Activated T-helper 1 cell treated with anti-CD3 and anti-CD28 coated beads, Interleukin-12 subunit alpha, Interleukin-12 subunit beta, Interleukin-2, Interleukin-4 antibody, amounts not matched to agents 30 ng/mL and 10 ng/mL and 1 ng/mL, durations not matched to agents 14 hours and 24 hours and 36 hours (primary cell): ENCODE measurements at regions of chr14 and their contacts with region 1.

Region 1: GRCh38 chr14:23057757-23058653 is 685 bp upstream of the CDH24 start:
- DNase-seq: peak; percentile 75
- H3K4me3 Mint-ChIP-seq: peak overlapping the region; percentile 86
- H3K27ac Mint-ChIP-seq: no peak overlapping the region
- H3K4me1 Mint-ChIP-seq: peaks cover 21% of the 10 kb centered on the region
- H3K27me3 Mint-ChIP-seq: peaks cover 8% of the 10 kb centered on the region

Region 2: DNA sequence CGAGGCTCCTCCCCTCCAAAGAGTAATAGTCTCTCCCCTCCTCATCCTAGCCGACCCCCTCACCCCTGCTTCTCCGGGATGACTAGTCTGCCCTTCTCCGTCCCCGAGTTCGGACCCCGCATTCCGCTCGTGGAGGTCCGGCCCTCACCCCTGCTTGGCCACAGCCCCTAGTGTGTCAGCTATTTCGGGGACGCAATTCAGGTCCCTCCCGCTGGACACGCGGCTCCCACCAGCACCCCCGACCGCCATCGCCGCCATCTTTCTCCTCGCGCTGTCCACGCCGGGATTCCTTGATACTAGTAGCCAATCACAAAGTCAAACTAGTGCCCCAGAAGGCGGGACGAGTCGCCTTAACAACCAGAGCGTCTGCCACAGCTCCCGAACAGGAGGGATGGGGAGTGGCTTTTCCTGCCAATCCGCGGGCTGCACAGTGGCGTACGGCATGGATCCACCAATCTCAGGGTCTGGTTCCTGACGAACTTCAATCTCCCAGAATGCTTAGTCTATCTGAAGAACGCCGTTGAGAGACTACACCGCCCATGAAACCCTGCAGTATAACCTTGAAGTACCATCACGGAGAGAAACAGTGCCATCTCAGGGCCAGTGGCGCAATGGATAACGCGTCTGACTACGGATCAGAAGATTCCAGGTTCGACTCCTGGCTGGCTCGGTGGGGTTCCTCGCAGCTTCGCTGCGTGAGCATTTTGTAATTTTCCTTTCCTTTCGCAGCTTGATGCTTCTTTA is 128.7 kb before region 1 on chr14 and contains the start of gene PRMT5:
- intact Hi-C with region 1: loop called (anchors 1 kb)
- DNase-seq: peak; percentile 95
- H3K4me3 Mint-ChIP-seq: no peak within 1 kb of the TSS
- H3K27ac Mint-ChIP-seq: no peak within 1 kb of the TSS
- H3K4me1 Mint-ChIP-seq: peaks cover 32% of the 10 kb centered on the region
- H3K27me3 Mint-ChIP-seq: no peaks in the 10 kb centered on the region
- total RNA-seq, gene PRMT5: 174 and 180 TPM in 2 replicates

Region 3: DNA sequence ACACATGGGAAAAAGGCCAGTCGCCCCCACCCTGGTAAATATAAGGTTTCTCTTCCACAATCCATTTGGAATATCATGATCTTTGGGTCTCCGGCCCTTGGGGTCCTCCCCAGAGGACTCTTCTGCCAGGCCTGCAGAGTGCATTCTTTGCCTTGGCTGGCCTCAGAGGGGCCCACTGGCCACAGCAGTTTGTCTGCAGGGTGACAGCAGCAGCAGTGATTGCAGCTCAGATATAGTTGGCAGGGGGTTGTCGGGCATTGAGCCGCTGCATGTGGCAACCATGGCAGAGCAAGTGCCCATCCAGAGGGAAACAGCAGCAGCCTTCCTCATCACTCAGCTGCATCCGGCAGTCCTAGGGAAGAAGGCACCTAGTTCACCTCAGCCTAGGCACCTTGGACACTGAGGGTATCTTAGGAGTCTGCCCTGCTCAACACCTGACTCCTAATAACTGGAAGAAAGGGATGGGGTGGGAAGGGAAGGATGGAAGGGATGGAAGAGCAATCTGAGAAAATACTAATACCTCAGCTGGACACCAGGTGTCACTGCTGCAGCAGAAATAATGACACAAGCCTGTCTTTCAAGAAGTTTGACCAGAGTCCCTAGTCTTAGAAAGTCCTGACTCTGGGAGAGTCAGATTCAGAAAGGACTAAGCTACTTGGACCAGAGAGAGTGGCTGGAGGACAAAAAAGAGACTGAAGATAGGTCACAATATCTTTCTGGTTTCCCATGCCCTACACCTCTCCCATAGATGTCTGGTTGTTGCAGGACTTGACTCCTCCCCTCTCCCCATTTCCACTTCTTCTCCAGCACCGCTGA is 84.6 kb before region 1 on chr14:
- intact Hi-C with region 1: loop called (anchors 1 kb)
- DNase-seq: no peak
- H3K4me3 Mint-ChIP-seq: no peak overlapping the region
- H3K27ac Mint-ChIP-seq: no peak overlapping the region
- H3K4me1 Mint-ChIP-seq: no peaks in the 10 kb centered on the region
- H3K27me3 Mint-ChIP-seq: peaks cover 13% of the 10 kb centered on the region

Region 4: DNA sequence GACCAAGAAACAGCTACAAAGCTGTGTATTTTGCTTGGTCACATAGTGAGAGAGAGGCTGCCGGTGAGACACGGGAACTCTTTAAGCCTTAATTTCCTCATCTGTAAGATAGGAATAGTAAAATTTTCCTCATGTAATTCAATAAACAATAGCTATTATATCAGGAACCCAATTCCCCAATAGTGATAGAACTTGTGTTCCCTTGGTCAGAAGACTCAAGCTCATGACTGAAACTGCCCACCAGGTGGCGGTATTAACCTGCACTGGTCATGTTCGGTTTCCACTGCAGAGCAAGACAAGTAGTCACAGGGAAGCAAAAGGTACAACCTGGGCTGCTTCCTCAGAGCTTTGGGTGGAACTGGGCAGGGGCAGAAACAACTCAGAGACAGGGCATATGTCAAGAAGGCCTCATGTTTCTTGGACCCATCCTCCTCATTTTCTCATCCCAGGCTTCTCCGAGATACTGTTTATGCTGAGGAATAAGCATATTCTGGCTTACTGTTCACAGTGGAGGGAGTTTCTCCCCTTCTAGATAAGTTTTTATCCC is 71.4 kb before region 1 on chr14:
- intact Hi-C with region 1: loop called (anchors 1 kb)
- DNase-seq: peak; percentile 79
- H3K4me3 Mint-ChIP-seq: no peak overlapping the region
- H3K27ac Mint-ChIP-seq: no peak overlapping the region
- H3K4me1 Mint-ChIP-seq: no peaks in the 10 kb centered on the region
- H3K27me3 Mint-ChIP-seq: peaks cover 3% of the 10 kb centered on the region

Region 5: GRCh38 chr14:22994762-22995275 is 63.2 kb before region 1 on chr14:
- intact Hi-C with region 1: loop called (anchors 2 kb)
- DNase-seq: no peak
- H3K4me3 Mint-ChIP-seq: no peak overlapping the region
- H3K27ac Mint-ChIP-seq: no peak overlapping the region
- H3K4me1 Mint-ChIP-seq: no peaks in the 10 kb centered on the region
- H3K27me3 Mint-ChIP-seq: no peaks in the 10 kb centered on the region

Region 6: DNA sequence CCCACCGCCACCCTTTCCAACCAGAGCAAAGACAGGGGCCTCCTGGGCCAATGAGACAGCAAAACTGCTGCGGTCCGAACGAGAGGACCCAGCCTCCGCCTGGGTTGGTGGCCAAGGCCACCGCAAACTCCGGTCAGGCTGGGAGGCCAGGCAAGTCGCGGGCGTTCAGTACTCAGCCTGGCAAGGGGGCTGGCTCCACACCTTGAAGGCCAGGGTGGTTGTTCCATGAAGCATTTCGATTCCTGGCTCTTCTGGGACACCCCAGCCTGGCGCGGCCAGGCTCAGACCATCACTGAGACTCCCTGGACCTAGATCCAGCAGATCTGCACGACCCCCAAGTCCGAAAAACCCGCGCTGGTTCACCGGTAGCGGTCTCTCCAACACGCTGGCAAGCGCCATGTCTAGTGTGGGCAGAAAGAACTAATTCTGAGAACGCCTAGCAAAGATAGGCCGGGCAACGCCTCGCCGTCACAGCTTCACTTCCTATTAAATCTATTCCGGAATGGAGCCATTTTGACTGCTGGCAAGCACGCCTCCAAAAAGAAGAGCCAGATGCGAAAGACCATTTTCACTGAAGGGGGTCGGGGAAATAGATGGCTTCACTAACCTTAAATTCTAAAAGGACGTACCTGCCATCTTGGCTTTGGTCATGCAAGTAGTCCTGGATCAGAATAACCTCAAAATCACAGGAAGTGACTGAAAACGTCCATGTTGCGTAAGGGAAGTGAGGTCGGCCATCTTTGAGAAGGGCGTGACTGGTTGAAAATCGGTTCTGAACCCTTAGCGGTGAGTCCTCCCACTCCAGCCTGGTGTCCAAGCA is 23.3 kb before region 1 on chr14 and contains the start of gene PSMB5:
- intact Hi-C with region 1: loop called (anchors 1 kb)
- DNase-seq: peak; percentile 85
- H3K4me3 Mint-ChIP-seq: peak within 1 kb of the TSS; percentile 98
- H3K27ac Mint-ChIP-seq: peak within 1 kb of the TSS; percentile 98
- H3K4me1 Mint-ChIP-seq: peaks cover 28% of the 10 kb centered on the region
- H3K27me3 Mint-ChIP-seq: peaks cover 2% of the 10 kb centered on the region
- total RNA-seq, gene PSMB5: 144 and 148 TPM in 2 replicates

Region 7: GRCh38 chr14:23068476-23069412 is 10.7 kb after region 1 on chr14:
- intact Hi-C with region 1: loop called (anchors 1 kb)
- DNase-seq: peak; percentile 65
- H3K4me3 Mint-ChIP-seq: peak overlapping the region; percentile 74
- H3K27ac Mint-ChIP-seq: peak overlapping the region; percentile 53
- H3K4me1 Mint-ChIP-seq: peaks cover 42% of the 10 kb centered on the region
- H3K27me3 Mint-ChIP-seq: no peaks in the 10 kb centered on the region